ENCODE measurements at regions of chr16 and their contacts with region 1.

Region 1: DNA sequence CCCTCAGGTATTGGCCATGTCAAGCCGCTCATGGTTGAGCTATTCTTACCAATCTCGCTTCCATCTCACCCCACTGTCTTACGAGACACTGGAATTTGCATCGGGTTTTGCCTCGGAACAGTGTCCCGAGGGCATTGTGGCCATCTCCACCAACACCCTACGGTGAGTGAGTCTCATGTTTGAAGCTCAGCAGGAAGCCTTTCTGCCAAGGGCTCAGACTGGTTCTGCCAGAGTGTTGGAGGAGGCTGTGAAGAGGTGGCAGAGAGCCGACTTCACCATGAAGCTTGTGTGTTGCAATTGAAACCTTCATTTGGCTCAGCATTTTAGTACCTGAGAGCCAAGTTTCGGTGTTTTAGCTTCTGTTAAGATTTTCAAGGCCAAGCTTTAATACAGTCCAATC is 38.0 kb downstream of the SF3B3 start:
- DNase-seq: peak; percentile 83 to 98
- H3K4me3 ChIP-seq: no peak overlapping the region
- H3K27ac ChIP-seq: peak overlapping the region; percentile 96
- H3K4me1 ChIP-seq: peaks cover 58% of the 10 kb centered on the region
- H3K27me3 ChIP-seq: no peaks in the 10 kb centered on the region
- CTCF ChIP-seq: no peak

Region 2: GRCh38 chr16:70770626-70771552 is 209.3 kb after region 1 on chr16:
- CTCF ChIA-PET with region 1: no interaction called
- POLR2A ChIA-PET with region 1: interaction called, 16 read pairs
- intact Hi-C with region 1: loop called (anchors 10 kb)
- DNase-seq: peak; percentile 67 to 76
- H3K4me3 ChIP-seq: no peak overlapping the region
- H3K27ac ChIP-seq: no peak overlapping the region
- H3K4me1 ChIP-seq: peaks cover 25% of the 10 kb centered on the region
- H3K27me3 ChIP-seq: no peaks in the 10 kb centered on the region
- CTCF ChIP-seq: peak; percentile 98

Measured in PC-9 (cell line).